Heart right ventricle (tissue), 16 donors: ENCODE measurements at regions of chr2 and their contacts with region 1.

Region 1: GRCh38 chr2:200703127-200703925 is 108.4 kb upstream of the BZW1 start:
- DNase-seq: peak in 1 of 2 donors; percentile 36
- ATAC-seq: peak in 4 of 8 donors; percentile 35 to 64 (median 36)
- H3K4me3 ChIP-seq: no peak overlapping the region
- H3K27ac ChIP-seq: no peak overlapping the region
- H3K4me1 ChIP-seq: peaks cover 0 to 15% (median 0%) of the 10 kb centered on the region in 9 donors
- H3K27me3 ChIP-seq: no peaks in the 10 kb centered on the region
- CTCF ChIP-seq: peak; percentile 7 to 70 (median 60)

Region 2: GRCh38 chr2:199979832-199980628 is 723.3 kb before region 1 on chr2:
- intact Hi-C with region 1: loop called in 8 of 10 experiments (anchors 5 to 10 kb)
- DNase-seq: peak; percentile 84 to 87
- ATAC-seq: peak; percentile 37 to 84 (median 74)
- H3K4me3 ChIP-seq: peak overlapping the region in 6 of 10 donors; percentile 6 to 33 (median 24)
- H3K27ac ChIP-seq: no peak overlapping the region
- H3K4me1 ChIP-seq: peaks cover 0 to 12% (median 4%) of the 10 kb centered on the region in 9 donors
- H3K27me3 ChIP-seq: no peaks in the 10 kb centered on the region
- CTCF ChIP-seq: peak; percentile 69 to 92 (median 91)

Region 3: DNA sequence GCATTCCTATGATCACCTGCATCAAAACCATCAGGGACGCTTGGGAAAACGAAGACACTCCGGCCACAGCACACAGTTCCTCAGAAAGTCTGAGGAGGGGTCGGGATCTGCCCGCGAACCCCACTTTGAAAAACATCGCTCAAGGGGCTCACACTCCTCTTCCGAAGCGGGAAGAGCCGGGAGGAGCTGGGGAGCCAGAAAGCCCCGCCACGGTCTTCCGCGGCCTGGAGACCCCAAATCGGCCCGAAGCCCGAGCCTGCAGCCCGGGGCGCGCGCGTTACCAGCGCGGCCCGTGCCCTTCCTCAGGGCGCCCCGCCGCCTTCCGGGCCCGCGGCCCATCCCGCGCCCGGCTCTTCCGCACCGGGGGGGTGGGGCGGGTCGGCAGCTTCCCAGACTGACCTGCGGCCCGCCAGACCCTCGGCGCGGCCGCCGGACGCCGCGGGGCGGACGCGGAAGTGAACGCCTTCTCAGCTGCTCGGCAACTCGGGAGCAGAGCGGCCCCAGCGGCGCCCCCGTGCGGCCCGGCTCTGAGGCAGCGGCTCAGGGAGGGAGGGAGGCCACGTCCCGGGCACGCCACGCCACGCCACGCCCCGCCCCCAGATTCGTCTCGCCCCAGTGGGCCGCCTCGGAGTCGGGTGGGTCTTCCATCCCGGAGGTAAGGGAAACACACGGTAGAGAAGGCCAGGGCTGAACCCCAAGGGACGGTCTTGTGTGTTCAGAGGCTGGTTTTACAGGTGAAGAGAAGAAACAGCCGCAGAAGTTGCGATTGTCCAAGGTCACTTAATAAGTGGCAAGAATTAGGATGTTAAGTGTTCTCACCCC is 193.5 kb before region 1 on chr2 and contains the start of gene KCTD18:
- intact Hi-C with region 1: loop called in 1 of 10 experiments (anchors 10 kb)
- DNase-seq: peak; percentile 92 to 97
- ATAC-seq: peak; percentile 98 to 100 (median 99)
- H3K4me3 ChIP-seq: peak within 1 kb of the TSS; percentile 64 to 94 (median 82)
- H3K27ac ChIP-seq: peak within 1 kb of the TSS; percentile 60 to 96 (median 91)
- H3K4me1 ChIP-seq: peaks cover 0 to 18% (median 11%) of the 10 kb centered on the region in 9 donors
- H3K27me3 ChIP-seq: peaks cover 0 to 4% (median 0%) of the 10 kb centered on the region in 7 donors
- CTCF ChIP-seq: peak; percentile 76 to 98 (median 87)
- total RNA-seq, gene KCTD18: 9.5 to 16.5 (median 10.3) TPM

Region 4: DNA sequence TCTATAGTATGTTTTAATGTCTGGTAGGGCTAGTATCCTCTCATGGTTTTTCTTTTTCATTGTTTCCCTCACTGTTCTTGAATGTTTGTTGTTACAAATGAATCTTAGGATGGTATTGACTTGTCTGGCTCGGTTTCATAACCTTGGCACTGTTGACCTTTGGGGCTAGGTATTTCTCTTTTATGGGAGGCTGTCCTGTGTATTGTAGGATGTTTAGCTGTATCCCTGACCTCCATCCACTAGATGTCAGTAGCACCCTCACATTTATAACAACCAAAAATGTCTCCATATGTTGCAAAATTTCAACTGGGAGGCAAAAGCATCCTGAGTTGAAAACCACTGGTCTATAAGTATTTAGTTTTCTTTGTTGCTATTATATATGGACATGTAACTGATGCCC is 124.5 kb before region 1 on chr2:
- intact Hi-C with region 1: loop called in 9 of 10 experiments (anchors 2 to 10 kb)
- DNase-seq: no peak
- ATAC-seq: no peak
- H3K4me3 ChIP-seq: no peak overlapping the region
- H3K27ac ChIP-seq: no peak overlapping the region
- H3K4me1 ChIP-seq: no peaks in the 10 kb centered on the region
- H3K27me3 ChIP-seq: no peaks in the 10 kb centered on the region
- CTCF ChIP-seq: peak in 6 of 9 donors; percentile 9 to 49 (median 20)

Region 5: GRCh38 chr2:200585730-200586643 is 117.3 kb before region 1 on chr2 and contains the start of gene AOX1:
- intact Hi-C with region 1: loop called in 3 of 10 experiments (anchors 5 to 10 kb)
- DNase-seq: peak in 1 of 2 donors; percentile 46
- ATAC-seq: peak; percentile 51 to 78 (median 71)
- H3K4me3 ChIP-seq: peak within 1 kb of the TSS; percentile 16 to 71 (median 58)
- H3K27ac ChIP-seq: peak within 1 kb of the TSS in 7 of 10 donors; percentile 18 to 71 (median 33)
- H3K4me1 ChIP-seq: peaks cover 0 to 14% (median 7%) of the 10 kb centered on the region in 9 donors
- H3K27me3 ChIP-seq: peaks cover 0 to 5% (median 0%) of the 10 kb centered on the region in 7 donors
- CTCF ChIP-seq: peak in 1 of 9 donors; percentile 6
- total RNA-seq, gene AOX1: 0.72 to 22.3 (median 2.2) TPM